ENCODE measurements at regions of chr11 and their contacts with region 1.

Region 1: DNA sequence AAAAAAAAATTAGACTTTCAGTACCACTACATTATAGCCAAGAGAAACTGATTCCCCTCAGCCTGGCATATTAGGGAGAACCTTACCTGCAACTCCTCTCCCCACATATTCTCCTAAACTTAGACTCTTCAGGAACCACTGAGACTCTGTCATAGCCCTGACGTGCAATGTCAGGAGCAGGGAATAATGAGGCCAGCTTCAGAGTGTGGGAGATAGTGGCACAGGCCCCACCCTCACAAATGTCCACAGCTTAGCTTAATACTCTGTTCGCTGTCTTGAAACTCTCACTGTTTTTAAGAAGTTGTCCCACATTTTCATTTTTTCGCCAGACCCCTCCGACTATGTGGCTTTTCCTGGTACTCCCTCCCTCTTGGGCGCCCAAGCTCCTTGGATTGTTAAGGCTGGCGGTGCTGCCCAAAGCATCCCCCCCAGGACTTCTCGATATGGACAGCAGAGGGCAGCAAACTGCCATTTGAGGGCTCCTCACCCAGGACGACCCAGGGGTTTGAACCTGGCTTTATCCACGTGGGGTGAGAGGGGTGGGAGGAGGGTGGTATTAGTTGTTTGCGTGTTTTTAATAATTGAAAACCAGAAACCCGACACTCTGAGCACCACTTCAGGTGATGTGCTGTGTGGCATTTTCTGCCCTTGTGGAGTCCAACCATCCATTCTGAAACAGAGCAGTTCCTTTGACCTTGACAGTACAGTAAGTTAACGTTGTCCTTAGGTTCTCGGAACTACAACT is 45.2 kb upstream of the RASSF10 start:
- DNase-seq: no peak
- H3K4me3 ChIP-seq: no peak overlapping the region
- H3K27me3 ChIP-seq: peaks cover 2% of the 10 kb centered on the region
- CTCF ChIP-seq: peak; percentile 84

Region 2: GRCh38 chr11:12288212-12288930 is 675.6 kb before region 1 on chr11:
- CTCF ChIA-PET with region 1: interaction called, 44 read pairs
- POLR2A ChIA-PET with region 1: no interaction called
- DNase-seq: peak; percentile 64
- H3K4me3 ChIP-seq: no peak overlapping the region
- H3K27me3 ChIP-seq: no peaks in the 10 kb centered on the region
- CTCF ChIP-seq: peak; percentile 98

Region 3: GRCh38 chr11:12914400-12914912 is 49.5 kb before region 1 on chr11:
- CTCF ChIA-PET with region 1: interaction called, 16 read pairs
- POLR2A ChIA-PET with region 1: no interaction called
- DNase-seq: no peak
- H3K4me3 ChIP-seq: no peak overlapping the region
- H3K27me3 ChIP-seq: no peaks in the 10 kb centered on the region
- CTCF ChIP-seq: peak; percentile 85

Region 4: GRCh38 chr11:13145461-13145860 is 181.5 kb after region 1 on chr11:
- CTCF ChIA-PET with region 1: interaction called, 154 read pairs
- POLR2A ChIA-PET with region 1: no interaction called
- DNase-seq: no peak
- H3K4me3 ChIP-seq: no peak overlapping the region
- H3K27me3 ChIP-seq: no peaks in the 10 kb centered on the region
- CTCF ChIP-seq: no peak

Region 5: GRCh38 chr11:13160346-13160745 is 196.4 kb after region 1 on chr11:
- CTCF ChIA-PET with region 1: interaction called, 24 read pairs
- POLR2A ChIA-PET with region 1: no interaction called
- DNase-seq: no peak
- H3K4me3 ChIP-seq: no peak overlapping the region
- H3K27me3 ChIP-seq: peaks cover 14% of the 10 kb centered on the region
- CTCF ChIP-seq: no peak

Region 6: DNA sequence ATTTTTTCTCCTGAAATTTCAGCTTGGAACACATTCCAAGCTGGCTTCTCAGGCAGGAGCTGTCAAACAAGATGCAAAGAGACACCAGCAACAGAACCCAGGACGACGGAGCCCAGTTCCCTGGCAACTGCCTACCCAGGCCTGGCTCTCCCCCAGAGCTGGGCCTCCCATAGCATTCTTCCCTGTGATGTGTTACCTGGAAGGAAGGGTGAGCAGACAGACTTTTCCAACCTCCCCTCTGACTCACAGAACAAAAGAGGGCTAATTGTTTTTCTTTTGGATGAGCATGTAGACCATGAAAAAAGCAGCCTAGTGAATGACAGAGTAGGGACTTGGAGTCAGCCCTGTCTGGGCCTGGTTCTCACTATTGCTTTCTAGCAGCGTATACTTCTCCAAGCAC is 258.3 kb after region 1 on chr11:
- CTCF ChIA-PET with region 1: no interaction called
- POLR2A ChIA-PET with region 1: no interaction called
- DNase-seq: no peak
- H3K4me3 ChIP-seq: no peak overlapping the region
- H3K27me3 ChIP-seq: no peaks in the 10 kb centered on the region
- CTCF ChIP-seq: no peak

Measured in BJ (cell line).